Mammary epithelial cell (primary cell): ENCODE measurements at regions of chr2 and their contacts with region 1.

Region 1: DNA sequence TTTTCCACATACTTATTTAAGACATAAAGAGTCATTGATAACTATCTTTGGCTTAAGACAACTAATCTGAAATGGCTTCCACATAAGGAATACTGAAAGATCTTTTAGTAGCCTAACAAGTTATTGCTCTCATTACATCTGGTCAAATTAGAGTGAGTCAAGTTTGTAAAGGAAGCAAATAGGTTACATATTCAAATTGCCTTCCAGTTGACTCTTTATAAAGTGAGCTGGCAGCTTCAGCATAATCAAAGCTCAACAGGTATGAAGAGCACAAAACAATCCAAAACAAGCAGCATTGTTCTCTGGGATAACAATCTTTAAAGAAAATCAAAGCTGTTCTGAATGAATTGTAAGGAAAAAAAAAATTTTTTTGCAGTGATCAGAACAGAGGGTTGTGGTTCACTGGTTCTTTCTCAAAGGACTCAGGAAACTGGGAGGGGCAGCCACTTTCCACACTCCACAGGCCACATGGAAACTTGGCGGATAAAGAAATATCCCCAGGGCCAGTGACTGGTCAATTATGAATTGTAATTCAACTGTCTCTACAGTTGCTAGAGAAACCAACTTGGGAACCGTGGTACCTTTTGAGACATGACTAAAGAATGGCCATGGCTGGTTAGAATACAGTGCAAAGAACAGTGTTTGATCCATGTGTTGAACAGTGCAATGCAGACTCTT is 369.3 kb upstream of the KCNH7 start:
- DNase-seq: peak; percentile 88
- H3K4me3 ChIP-seq: no peak overlapping the region
- H3K27ac ChIP-seq: peak overlapping the region; percentile 86
- H3K4me1 ChIP-seq: peaks cover 30% of the 10 kb centered on the region
- H3K27me3 ChIP-seq: no peaks in the 10 kb centered on the region
- CTCF ChIP-seq: no peak

Region 2: DNA sequence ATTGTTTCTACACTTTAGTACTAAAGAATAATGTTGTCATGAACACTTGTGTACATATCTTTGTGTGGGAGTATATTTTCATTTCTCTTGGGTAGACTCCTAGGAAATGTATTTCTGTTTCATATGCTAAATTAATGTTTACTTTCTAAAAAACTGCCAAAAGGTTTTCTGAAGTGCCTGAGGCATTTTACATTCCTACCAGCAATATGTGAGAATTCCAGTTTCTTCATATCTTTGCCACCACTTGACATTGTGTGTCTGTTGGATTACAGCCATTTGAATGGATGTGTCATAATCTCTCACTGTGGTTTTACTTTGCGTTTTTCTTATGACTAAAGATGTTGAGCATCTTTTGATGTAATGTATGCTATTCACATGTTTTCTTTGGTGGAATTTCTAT is 58.9 kb after region 1 on chr2:
- CTCF ChIA-PET with region 1: no interaction called
- dilution Hi-C with region 1: no loop called
- in situ Hi-C with region 1: no loop called
- intact Hi-C with region 1: loop called (anchors 1 kb)
- DNase-seq: peak; percentile 96
- H3K4me3 ChIP-seq: no peak overlapping the region
- H3K27ac ChIP-seq: no peak overlapping the region
- H3K4me1 ChIP-seq: peaks cover 17% of the 10 kb centered on the region
- H3K27me3 ChIP-seq: no peaks in the 10 kb centered on the region
- CTCF ChIP-seq: no peak

Region 3: DNA sequence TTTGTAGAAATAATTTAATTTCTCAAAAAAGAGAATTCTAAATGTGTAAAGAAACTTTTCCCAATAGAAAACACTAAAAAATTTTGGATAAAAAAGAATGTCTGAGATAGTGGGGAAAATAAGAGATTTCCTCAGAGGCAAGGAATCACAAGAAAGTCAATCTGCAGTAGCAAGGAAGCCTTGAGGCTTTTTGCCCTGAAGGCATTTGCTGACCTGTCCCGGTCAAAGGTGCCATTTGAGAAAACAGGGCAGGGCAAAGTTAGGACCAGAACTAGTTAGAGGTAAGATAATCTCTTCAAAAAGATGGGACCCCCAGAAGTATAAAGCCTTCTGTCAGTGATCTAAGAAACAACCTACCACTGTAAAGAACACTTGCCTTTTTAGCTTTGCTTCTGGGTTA is 70.3 kb after region 1 on chr2:
- CTCF ChIA-PET with region 1: no interaction called
- dilution Hi-C with region 1: no loop called
- in situ Hi-C with region 1: no loop called
- intact Hi-C with region 1: no loop called
- DNase-seq: no peak
- H3K4me3 ChIP-seq: no peak overlapping the region
- H3K27ac ChIP-seq: no peak overlapping the region
- H3K4me1 ChIP-seq: no peaks in the 10 kb centered on the region
- H3K27me3 ChIP-seq: no peaks in the 10 kb centered on the region
- CTCF ChIP-seq: no peak